GM10248 (cell line): ENCODE measurements at regions of chr14 and their contacts with region 1.

Region 1: GRCh38 chr14:35215110-35215876 is 76.9 kb upstream of the PSMA6 start:
- DNase-seq: peak; percentile 35
- CTCF ChIP-seq: peak; percentile 58

Region 2: GRCh38 chr14:35292051-35292769 is 76.9 kb after region 1 on chr14 and contains the start of gene PSMA6:
- CTCF ChIA-PET with region 1: interaction called, 5 read pairs
- POLR2A ChIA-PET with region 1: interaction called, 13 read pairs
- DNase-seq: peak; percentile 95
- CTCF ChIP-seq: no peak